ENCODE measurements at regions of chr1 and their contacts with region 1.

Region 1: DNA sequence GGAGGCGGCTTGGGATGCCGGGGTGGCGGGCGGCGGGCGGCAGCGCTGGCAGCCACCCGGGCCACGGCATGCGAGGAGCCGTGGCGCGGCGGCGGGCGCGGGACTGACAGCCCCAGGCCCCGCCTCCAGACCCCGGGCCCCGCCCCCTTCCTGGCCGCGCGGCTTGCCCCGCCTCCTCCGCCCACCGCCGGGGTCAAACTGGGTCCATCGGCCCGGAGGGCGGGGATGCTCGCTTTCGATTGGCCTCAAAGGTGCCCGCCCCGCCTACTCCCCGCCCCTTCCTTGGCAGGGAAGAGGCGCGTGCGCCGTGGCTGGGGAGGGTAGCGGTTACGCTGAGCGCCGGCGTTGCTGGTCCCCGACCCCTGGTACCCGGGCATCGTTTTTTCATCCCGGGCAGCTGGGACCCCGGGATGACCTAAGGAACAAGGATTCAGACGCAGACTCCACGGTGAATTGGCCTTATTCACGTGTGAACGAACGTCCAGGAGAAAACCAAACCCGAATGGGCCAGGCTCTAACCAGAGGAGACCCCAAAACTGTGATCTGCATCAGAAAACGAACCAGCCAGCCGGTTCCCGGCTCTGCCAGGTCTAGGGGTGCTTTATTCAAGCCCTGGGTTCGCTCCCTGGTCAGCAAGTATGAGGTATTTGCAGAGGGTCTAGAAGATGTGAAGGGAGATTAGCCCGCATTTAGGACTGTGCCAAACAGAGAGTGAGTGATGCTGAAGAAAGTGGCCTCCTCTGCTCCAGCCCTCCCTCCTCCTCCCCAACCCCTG is 117.2 kb upstream of the GUCA2B start:
- DNase-seq: peak; percentile 76
- H3K4me3 ChIP-seq: peak overlapping the region; percentile 81
- H3K27ac ChIP-seq: peak overlapping the region; percentile 31
- H3K27me3 ChIP-seq: peaks cover 5% of the 10 kb centered on the region
- CTCF ChIP-seq: no peak

Region 2: DNA sequence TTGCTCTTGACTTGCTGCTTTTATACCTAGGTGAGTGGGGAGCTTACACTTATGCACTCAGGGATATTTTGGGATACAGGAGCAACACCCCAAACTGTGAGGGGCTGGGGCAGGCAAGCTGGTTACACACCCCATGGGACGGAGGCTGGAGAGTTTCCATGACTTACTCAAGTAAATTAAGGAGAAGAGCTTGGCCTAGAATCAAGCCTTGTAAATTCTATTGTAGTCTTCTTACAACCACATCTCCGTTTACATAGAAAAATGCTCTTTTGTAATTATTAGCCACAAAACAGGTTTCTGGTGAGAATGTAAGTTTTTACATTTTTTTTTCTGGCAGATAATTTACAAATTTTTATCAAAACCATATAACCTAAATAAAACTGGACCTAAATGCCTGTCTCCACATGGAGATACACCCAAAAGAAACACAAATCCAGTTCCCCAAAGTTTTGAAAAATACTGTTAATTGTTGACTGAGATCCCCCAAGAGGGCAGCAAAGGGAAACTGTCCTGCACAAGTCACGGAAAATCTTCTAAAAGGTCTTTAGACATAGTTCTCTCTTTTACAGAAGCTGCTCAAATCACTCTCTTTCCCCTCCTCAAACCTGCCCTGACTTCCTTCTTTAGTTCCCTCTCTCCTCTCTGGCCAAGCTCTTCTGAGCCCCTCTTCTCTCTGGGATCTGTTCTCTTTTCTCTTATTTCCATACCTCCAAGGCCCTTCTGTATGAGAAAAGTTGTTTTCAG is 251.3 kb before region 1 on chr1:
- CTCF ChIA-PET with region 1: interaction called, 10 read pairs
- POLR2A ChIA-PET with region 1: no interaction called
- DNase-seq: no peak
- H3K4me3 ChIP-seq: no peak overlapping the region
- H3K27ac ChIP-seq: no peak overlapping the region
- H3K27me3 ChIP-seq: no peaks in the 10 kb centered on the region
- CTCF ChIP-seq: no peak

Region 3: GRCh38 chr1:42221952-42222606 is 186.1 kb after region 1 on chr1:
- CTCF ChIA-PET with region 1: no interaction called
- POLR2A ChIA-PET with region 1: no interaction called
- DNase-seq: no peak
- H3K4me3 ChIP-seq: no peak overlapping the region
- H3K27ac ChIP-seq: no peak overlapping the region
- H3K27me3 ChIP-seq: no peaks in the 10 kb centered on the region
- CTCF ChIP-seq: no peak